PC-9 (cell line): ENCODE measurements at regions of chr14 and their contacts with region 1.

Region 1: GRCh38 chr14:89973234-89973823 is 17.6 kb downstream of the TDP1 start:
- DNase-seq: peak; percentile 14 to 40
- H3K4me3 ChIP-seq: no peak overlapping the region
- H3K27ac ChIP-seq: no peak overlapping the region
- H3K4me1 ChIP-seq: no peaks in the 10 kb centered on the region
- H3K27me3 ChIP-seq: no peaks in the 10 kb centered on the region
- CTCF ChIP-seq: peak; percentile 79

Region 2: GRCh38 chr14:89833120-89833644 is 140.1 kb before region 1 on chr14:
- CTCF ChIA-PET with region 1: no interaction called
- POLR2A ChIA-PET with region 1: no interaction called
- intact Hi-C with region 1: no loop called
- DNase-seq: peak in 1 of 2 experiments; percentile 34
- H3K4me3 ChIP-seq: no peak overlapping the region
- H3K27ac ChIP-seq: no peak overlapping the region
- H3K4me1 ChIP-seq: no peaks in the 10 kb centered on the region
- H3K27me3 ChIP-seq: no peaks in the 10 kb centered on the region
- CTCF ChIP-seq: no peak

Region 3: DNA sequence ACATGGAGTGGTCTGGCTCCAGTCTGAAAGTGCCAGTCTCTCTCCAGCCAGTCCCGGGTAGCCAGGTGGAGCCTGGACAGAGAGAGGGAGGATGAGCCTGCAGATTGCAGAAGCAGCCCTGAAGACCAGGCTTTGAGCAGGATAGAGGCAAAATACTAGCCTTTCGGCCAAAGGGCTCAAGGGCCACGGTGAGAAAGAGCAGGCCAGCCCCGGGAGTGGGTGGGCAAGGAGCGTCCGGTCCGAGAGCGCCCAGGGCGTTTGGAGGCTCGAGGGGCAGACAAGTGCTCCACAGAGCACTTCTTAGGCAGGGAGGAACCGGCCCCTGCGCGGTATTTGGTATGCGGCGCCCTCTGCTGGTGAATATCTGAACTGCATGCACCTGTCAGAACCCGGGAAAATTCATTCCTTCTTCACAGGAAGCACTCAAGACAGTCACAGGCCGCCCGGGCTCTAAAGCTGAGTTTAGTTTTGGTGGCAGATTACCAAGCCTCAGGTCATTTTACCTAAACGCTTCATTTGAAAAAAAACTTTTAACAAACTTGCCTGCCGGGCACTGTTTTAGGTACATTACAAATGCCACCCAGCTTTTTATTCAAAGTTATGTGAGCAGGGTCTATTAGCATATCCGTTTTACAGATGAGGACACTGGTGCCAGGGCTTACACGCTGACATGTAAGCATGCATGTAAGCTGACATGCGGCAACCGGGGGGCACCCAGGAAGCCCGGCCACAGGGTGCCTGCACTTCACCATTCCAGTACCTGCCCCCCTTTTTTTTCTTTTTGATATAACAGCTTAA is 262.0 kb after region 1 on chr14:
- CTCF ChIA-PET with region 1: interaction called, 3 read pairs
- POLR2A ChIA-PET with region 1: no interaction called
- intact Hi-C with region 1: loop called (anchors 1 kb)
- DNase-seq: peak in 1 of 2 experiments; percentile 31
- H3K4me3 ChIP-seq: no peak overlapping the region; the same call in 1 of the 2 replicates
- H3K27ac ChIP-seq: no peak overlapping the region
- H3K4me1 ChIP-seq: no peaks in the 10 kb centered on the region
- H3K27me3 ChIP-seq: no peaks in the 10 kb centered on the region
- CTCF ChIP-seq: peak; percentile 91

Region 4: DNA sequence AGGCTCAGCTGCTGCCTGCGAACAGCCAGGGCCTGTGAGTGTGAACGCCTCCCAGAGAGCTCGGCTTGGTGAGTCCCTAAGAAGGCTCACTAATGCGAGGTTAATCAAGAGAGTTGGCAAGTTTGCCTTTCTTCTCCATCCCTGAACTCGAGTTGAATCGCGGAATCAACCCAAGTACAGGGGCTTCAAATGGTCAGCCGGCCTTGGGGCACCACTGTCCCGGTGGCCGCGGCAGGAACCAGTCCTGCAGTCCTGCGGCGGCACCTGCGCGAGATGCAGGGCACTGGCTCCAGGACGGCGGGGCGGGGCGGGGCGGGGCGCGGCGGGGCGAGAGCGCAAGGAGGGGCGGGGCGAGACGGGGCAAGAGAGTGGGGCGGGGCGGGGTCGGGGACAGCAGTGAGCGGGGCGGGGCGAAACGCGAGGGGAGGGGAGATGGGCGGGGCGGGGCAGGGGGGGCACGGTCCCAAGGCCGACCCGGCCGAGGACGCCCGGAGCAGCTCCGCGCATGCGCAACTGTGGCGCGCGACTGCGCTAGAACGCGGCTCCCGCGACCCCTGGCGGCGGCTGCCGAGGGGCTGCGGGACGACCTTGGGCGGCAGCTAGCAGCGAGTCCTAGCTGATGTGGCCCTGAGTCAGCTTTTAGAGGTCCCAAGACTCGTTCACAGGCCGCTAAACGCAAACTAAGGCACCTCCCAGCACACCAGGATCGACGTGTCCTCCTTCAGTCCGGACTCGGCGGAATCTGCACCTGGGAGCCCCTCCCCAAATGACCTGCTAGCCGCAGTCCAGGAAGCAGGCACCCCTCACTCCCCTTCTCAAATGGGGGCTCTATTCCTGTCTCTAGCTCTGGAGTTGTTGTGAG is 784.9 kb after region 1 on chr14:
- CTCF ChIA-PET with region 1: no interaction called
- POLR2A ChIA-PET with region 1: no interaction called
- intact Hi-C with region 1: loop called (anchors 1 kb)
- DNase-seq: peak; percentile 67 to 78
- H3K4me3 ChIP-seq: peak overlapping the region; percentile 53; the same call in 1 of the 2 replicates
- H3K27ac ChIP-seq: no peak overlapping the region
- H3K4me1 ChIP-seq: no peaks in the 10 kb centered on the region
- H3K27me3 ChIP-seq: no peaks in the 10 kb centered on the region
- CTCF ChIP-seq: peak; percentile 70